Ascending aorta (tissue), 2 donors: ENCODE measurements at regions of chr6 and their contacts with region 1.

Region 1: DNA sequence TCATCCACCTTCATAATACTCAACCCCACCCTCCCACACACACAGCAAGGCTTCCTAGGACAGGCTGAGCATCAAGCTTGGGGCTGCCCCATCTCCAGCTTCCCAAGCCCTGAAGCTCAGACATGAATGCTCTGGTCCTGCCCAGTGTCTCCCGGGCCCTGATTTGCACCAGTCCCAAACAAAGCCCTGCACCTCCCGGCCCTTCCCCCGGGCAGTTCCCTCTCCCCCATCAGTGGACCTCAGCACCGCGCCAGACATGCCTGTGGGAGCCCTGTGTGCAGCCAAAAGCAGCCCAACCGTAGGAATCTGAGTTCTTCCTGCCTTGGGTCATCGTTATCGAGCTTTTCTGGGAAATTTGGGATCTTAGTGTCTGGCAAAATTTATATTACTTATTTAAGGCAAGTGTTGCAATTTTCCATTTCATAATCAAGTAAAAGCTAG is 63.5 kb downstream of the THBS2 start:
- DNase-seq: peak; percentile 55 to 95
- H3K4me3 ChIP-seq: no peak overlapping the region
- H3K27ac ChIP-seq: peak overlapping the region; percentile 81 to 87
- H3K4me1 ChIP-seq: peaks cover 10 to 39% of the 10 kb centered on the region in 2 donors
- H3K27me3 ChIP-seq: no peaks in the 10 kb centered on the region
- CTCF ChIP-seq: no peak

Region 2: GRCh38 chr6:169172446-169172845 is 17.7 kb before region 1 on chr6:
- intact Hi-C with region 1: loop called (anchors 1 kb)
- DNase-seq: peak; percentile 84 to 97
- H3K4me3 ChIP-seq: no peak overlapping the region
- H3K27ac ChIP-seq: peak overlapping the region; percentile 87 to 95
- H3K4me1 ChIP-seq: peaks cover 12 to 55% of the 10 kb centered on the region in 2 donors
- H3K27me3 ChIP-seq: no peaks in the 10 kb centered on the region
- CTCF ChIP-seq: no peak

Region 3: DNA sequence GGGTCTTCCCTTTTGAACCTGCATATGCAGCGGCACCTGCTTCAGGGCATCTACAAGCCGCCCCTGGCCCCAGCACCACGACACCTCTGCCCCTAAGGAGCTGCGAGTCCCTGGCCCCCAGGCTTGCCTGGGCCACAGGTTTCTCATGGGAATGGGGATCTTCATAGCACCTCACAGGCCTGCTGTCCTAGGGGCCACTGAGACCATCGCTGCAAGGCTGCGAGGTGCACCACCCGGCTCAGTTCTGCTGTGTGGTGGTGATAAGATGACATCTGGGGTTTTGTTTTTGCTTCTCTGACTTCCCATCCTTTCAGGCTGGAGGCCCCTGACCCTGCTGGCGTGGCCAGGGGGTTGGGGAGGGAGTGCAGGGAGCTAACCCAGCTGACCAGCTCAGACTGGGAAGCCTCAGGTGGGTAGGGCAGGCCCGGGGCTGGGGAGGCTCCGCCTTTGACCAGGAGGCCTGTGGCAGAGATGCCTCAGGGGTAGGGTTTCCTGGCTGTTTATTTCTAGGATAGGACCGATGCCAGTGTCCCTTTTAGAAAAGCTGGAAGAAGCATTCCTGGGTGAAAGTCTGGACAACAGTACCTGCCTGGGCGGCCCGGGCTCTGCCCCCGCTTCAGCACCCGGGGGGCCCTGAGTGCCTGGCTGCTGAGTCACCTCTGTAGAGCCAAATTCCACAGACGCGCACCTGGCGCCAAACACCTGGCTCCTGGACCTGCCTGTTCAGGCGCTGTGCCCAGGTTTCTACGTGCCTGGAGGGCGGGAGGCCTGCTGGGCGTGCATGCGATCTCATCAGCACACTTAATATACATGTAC is 836.0 kb after region 1 on chr6:
- intact Hi-C with region 1: no loop called
- DNase-seq: peak in 1 of 2 donors; percentile 60
- H3K4me3 ChIP-seq: no peak overlapping the region
- H3K27ac ChIP-seq: no peak overlapping the region
- H3K4me1 ChIP-seq: no peaks in the 10 kb centered on the region
- H3K27me3 ChIP-seq: no peaks in the 10 kb centered on the region
- CTCF ChIP-seq: no peak